Activated CD4-positive, alpha-beta T cell treated with anti-CD3 and anti-CD28 coated beads, Interleukin-2, amount 10 ng/mL, durations not matched to agents 24 days and 14 days (primary cell): ENCODE measurements at regions of chr2 and their contacts with region 1.

Region 1: GRCh38 chr2:29014811-29015421 is 33.8 kb downstream of the TOGARAM2 start:
- DNase-seq: peak; percentile 90
- H3K4me3 Mint-ChIP-seq: peak overlapping the region; percentile 93
- H3K27ac Mint-ChIP-seq: peak overlapping the region; percentile 99
- H3K4me1 Mint-ChIP-seq: peaks cover 64% of the 10 kb centered on the region
- H3K27me3 Mint-ChIP-seq: no peaks in the 10 kb centered on the region

Region 2: GRCh38 chr2:28821295-28821958 is 193.5 kb before region 1 on chr2:
- intact Hi-C with region 1: loop called (anchors 10 kb)
- DNase-seq: peak; percentile 92
- H3K4me3 Mint-ChIP-seq: no peak overlapping the region
- H3K27ac Mint-ChIP-seq: no peak overlapping the region
- H3K4me1 Mint-ChIP-seq: peaks cover 5% of the 10 kb centered on the region
- H3K27me3 Mint-ChIP-seq: peaks cover 5% of the 10 kb centered on the region

Region 3: DNA sequence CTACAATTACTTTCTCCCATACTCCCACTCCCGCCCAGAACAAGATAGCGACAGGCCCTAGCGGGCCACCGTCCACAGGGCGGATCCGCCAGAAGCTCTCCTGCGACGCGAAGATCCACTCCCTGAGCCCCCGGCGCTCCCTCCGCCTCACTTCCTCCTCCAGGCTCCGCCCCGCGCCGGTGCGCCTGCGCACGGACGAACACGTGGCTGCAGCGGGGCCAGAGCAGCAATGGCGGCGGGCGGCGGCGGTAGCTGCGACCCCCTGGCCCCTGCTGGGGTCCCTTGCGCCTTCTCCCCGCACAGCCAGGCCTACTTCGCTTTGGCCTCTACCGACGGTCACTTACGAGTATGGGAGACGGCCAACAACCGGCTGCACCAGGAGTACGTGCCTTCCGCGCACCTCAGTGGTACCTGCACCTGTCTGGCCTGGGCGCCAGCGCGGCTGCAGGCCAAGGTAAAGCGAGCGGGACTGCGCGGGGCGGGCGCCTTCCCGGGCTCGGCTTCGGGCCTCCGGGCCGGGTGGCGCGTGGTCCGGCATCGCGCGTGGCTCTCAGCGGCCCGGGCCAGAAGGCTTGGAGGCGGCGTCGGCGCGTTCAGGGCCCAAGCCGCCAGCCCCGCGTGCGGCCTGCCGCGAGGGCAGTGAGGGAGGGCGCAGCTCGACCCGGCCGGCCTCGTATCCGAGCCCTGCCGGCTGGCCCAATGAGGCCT is 120.3 kb before region 1 on chr2 and contains the start of gene WDR43:
- intact Hi-C with region 1: loop called (anchors 10 kb)
- DNase-seq: peak; percentile 100
- H3K4me3 Mint-ChIP-seq: peak within 1 kb of the TSS; percentile 99
- H3K27ac Mint-ChIP-seq: peak within 1 kb of the TSS; percentile 95
- H3K4me1 Mint-ChIP-seq: peaks cover 32% of the 10 kb centered on the region
- H3K27me3 Mint-ChIP-seq: no peaks in the 10 kb centered on the region
- total RNA-seq, gene WDR43: 181 and 190 TPM in 2 replicates

Region 4: GRCh38 chr2:29000481-29000880 is 14.4 kb before region 1 on chr2:
- intact Hi-C with region 1: no loop called
- DNase-seq: peak; percentile 82
- H3K4me3 Mint-ChIP-seq: no peak overlapping the region
- H3K27ac Mint-ChIP-seq: no peak overlapping the region
- H3K4me1 Mint-ChIP-seq: peaks cover 18% of the 10 kb centered on the region
- H3K27me3 Mint-ChIP-seq: peaks cover 9% of the 10 kb centered on the region

Region 5: DNA sequence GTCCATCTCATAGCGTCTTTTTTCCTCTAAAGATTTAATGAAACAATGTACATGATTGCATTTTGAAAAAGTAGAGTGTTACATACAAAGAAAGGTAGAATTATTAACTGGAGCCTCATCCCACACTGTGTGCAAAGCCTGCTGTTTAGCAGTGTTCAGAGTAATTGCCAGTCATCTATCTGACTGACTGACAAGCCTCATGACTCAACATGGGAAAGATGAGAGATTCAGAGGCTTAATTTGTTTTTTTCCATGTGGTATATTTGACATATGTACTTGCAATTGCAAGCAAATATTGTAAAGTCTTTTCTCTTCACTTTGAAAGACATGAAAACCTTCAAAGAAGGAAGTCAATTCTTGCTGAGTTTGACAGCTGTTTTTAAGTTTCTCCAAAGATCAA is 44.7 kb after region 1 on chr2:
- intact Hi-C with region 1: loop called (anchors 1 kb)
- DNase-seq: no peak
- H3K4me3 Mint-ChIP-seq: no peak overlapping the region
- H3K27ac Mint-ChIP-seq: peak overlapping the region; percentile 58
- H3K4me1 Mint-ChIP-seq: peaks cover 6% of the 10 kb centered on the region
- H3K27me3 Mint-ChIP-seq: no peaks in the 10 kb centered on the region

Region 6: DNA sequence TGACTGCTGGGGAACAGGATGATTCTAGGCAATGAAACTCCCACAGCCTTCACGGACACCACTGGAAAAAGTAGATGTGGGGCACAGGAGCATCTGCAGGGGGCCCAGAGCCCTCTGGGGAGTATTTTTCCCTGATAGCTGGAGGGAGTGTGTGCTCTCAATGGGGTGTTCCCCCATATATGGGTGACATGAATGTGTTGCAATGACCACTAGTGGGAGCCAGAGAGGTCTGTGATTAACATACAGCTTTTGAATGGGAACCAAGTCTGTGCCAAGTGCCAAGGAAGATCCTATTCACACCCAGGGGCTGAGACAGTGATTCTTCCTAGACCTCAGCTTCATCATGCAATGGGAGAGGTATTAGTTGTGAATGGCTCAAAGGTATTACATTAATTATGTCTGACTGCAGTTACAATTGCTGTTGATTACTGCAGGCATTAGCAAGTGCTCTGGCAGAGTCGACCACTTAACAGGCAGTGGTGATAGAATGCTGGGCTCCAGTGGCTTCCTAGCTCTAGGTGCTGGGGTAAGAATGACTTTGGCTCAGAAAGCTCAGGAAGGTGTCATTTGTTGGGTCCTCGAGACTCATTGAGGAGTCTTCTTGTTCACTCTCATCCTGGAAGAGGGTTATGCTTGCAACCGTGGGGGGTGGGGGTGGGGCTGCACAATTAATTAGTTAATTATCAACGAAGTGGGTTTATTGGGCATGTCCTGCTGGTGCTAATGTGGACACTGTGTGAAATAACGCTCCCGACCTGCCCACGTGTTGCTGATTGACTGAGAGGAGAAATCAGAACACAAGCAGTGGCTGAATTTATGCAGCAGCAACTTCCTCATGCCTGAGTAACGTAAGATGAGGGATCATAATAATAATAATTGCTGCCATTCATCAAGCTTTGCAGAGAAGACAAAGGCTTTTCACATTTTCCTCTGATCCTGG is 294.4 kb after region 1 on chr2:
- intact Hi-C with region 1: loop called (anchors 10 kb)
- DNase-seq: peak; percentile 88
- H3K4me3 Mint-ChIP-seq: no peak overlapping the region
- H3K27ac Mint-ChIP-seq: no peak overlapping the region
- H3K4me1 Mint-ChIP-seq: peaks cover 26% of the 10 kb centered on the region
- H3K27me3 Mint-ChIP-seq: peaks cover 28% of the 10 kb centered on the region